Activated CD4-positive, alpha-beta memory T cell treated with anti-CD3 and anti-CD28 coated beads for 36 hours (primary cell): ENCODE measurements at regions of chr2 and their contacts with region 1.

Region 1: GRCh38 chr2:180980106-180980942 is at the start of gene UBE2E3:
- DNase-seq: peak; percentile 88
- H3K4me3 Mint-ChIP-seq: peak within 1 kb of the TSS; percentile 96
- H3K27ac Mint-ChIP-seq: peak within 1 kb of the TSS; percentile 87
- H3K4me1 Mint-ChIP-seq: peaks cover 37% of the 10 kb centered on the region
- H3K27me3 Mint-ChIP-seq: no peaks in the 10 kb centered on the region
- total RNA-seq, gene UBE2E3: 33.0 to 34.1 TPM

Region 2: DNA sequence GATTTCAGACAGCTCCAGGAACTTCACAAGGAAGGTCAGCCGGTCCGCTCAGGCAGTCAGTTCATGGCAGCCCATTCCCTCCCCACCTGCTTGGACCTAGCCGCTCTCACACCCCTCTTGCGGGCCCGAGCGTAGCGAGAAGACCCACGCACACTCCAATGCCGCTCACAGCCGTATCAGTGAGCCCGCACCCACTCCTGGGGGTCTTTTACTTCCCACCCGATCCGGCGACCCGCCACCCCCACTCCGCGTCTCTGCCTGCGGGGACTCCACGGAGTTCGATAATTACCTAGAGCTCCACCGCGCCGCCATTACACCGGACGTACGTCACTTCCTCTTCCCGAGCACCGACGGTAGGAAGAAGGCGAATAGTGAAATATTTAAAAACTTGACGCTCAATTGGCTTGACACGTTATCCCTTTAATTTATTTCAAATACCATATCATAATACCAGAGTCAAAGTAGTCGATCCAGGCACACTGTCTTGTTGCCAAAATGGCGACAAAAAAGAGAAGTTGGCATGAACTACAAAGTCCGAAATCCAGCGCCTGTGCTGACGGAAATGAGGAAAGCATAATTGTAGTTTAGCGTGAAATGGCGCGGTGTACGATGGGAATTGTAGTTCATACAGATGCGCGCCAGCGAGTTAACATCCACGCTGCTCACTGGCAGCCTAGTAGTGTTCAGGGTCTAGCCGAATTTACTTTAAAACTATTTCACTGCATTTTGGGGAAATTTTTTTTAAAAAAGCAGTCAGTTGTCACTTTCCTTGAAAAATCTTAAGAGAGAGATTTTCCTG is 973.3 kb before region 1 on chr2 and contains the start of gene CWC22:
- CTCF ChIA-PET with region 1: no interaction called
- POLR2A ChIA-PET with region 1: no interaction called
- intact Hi-C with region 1: loop called (anchors 5 kb)
- DNase-seq: peak; percentile 90
- H3K4me3 Mint-ChIP-seq: peak within 1 kb of the TSS; percentile 88
- H3K27ac Mint-ChIP-seq: peak within 1 kb of the TSS; percentile 99
- H3K4me1 Mint-ChIP-seq: peaks cover 38% of the 10 kb centered on the region
- H3K27me3 Mint-ChIP-seq: no peaks in the 10 kb centered on the region
- total RNA-seq, gene CWC22: 21.1 to 23.6 TPM

Region 3: DNA sequence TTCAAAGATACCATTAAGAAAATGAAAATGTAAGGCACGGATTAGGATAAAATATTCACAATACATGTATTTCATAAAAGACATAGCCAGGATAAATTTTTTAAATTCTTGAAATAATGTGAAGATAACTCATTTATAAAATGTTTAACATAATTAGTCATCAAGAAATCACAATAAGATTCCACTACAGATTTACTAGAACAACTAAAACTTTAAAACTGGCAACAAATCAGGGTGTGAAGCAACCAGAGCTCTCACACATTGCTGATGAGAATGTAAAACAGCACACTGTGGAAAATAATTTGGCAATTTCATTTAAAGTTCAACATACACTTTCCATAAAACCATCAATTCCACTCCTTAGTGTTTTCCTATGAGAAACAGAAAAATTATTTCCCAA is 89.5 kb before region 1 on chr2:
- CTCF ChIA-PET with region 1: no interaction called
- POLR2A ChIA-PET with region 1: no interaction called
- intact Hi-C with region 1: no loop called
- DNase-seq: no peak
- H3K4me3 Mint-ChIP-seq: no peak overlapping the region
- H3K27ac Mint-ChIP-seq: no peak overlapping the region
- H3K4me1 Mint-ChIP-seq: no peaks in the 10 kb centered on the region
- H3K27me3 Mint-ChIP-seq: no peaks in the 10 kb centered on the region

Region 4: GRCh38 chr2:180938451-180938850 is 41.9 kb before region 1 on chr2:
- CTCF ChIA-PET with region 1: interaction called, 3 read pairs
- POLR2A ChIA-PET with region 1: no interaction called
- intact Hi-C with region 1: loop called (anchors 1 kb)
- DNase-seq: no peak
- H3K4me3 Mint-ChIP-seq: no peak overlapping the region
- H3K27ac Mint-ChIP-seq: no peak overlapping the region
- H3K4me1 Mint-ChIP-seq: peaks cover 17% of the 10 kb centered on the region
- H3K27me3 Mint-ChIP-seq: peaks cover 4% of the 10 kb centered on the region

Region 5: DNA sequence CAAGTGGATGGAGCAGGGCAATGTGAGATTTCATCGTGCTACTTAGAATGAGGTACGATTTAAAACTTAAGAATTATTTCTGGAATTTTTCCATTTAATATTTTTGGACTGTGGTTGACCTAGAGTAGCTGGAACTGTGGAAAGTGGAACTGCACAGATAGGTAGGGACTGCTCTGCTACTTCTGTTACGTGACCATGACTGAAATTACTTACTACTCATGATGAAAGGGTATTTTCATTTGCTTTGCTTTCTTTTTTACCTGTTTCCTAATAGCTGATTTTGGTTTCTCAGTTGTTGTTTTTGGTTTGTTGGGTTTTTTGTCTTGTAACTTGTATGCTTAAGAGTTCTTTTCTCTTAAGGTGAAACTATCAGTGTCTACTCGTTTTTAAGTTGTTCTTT is 11.5 kb after region 1 on chr2:
- CTCF ChIA-PET with region 1: interaction called, 10 read pairs
- POLR2A ChIA-PET with region 1: interaction called, 10 read pairs
- intact Hi-C with region 1: no loop called
- DNase-seq: no peak
- H3K4me3 Mint-ChIP-seq: no peak overlapping the region
- H3K27ac Mint-ChIP-seq: no peak overlapping the region
- H3K4me1 Mint-ChIP-seq: peaks cover 24% of the 10 kb centered on the region
- H3K27me3 Mint-ChIP-seq: no peaks in the 10 kb centered on the region

Region 6: GRCh38 chr2:181058378-181059269 is 78.3 kb after region 1 on chr2:
- CTCF ChIA-PET with region 1: interaction called, 7 read pairs
- POLR2A ChIA-PET with region 1: no interaction called
- intact Hi-C with region 1: loop called (anchors 1 kb)
- DNase-seq: peak; percentile 24
- H3K4me3 Mint-ChIP-seq: no peak overlapping the region
- H3K27ac Mint-ChIP-seq: no peak overlapping the region
- H3K4me1 Mint-ChIP-seq: peaks cover 6% of the 10 kb centered on the region
- H3K27me3 Mint-ChIP-seq: no peaks in the 10 kb centered on the region

Region 7: DNA sequence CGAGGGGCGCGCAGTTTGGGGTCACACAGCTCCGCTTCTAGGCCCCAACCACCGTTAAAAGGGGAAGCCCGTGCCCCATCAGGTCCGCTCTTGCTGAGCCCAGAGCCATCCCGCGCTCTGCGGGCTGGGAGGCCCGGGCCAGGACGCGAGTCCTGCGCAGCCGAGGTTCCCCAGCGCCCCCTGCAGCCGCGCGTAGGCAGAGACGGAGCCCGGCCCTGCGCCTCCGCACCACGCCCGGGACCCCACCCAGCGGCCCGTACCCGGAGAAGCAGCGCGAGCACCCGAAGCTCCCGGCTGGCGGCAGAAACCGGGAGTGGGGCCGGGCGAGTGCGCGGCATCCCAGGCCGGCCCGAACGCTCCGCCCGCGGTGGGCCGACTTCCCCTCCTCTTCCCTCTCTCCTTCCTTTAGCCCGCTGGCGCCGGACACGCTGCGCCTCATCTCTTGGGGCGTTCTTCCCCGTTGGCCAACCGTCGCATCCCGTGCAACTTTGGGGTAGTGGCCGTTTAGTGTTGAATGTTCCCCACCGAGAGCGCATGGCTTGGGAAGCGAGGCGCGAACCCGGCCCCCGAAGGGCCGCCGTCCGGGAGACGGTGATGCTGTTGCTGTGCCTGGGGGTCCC is 476.9 kb after region 1 on chr2 and contains the start of gene ITGA4:
- CTCF ChIA-PET with region 1: interaction called, 3 read pairs
- POLR2A ChIA-PET with region 1: interaction called, 3 read pairs
- intact Hi-C with region 1: loop called (anchors 5 kb)
- DNase-seq: peak; percentile 90
- H3K4me3 Mint-ChIP-seq: peak within 1 kb of the TSS; percentile 88
- H3K27ac Mint-ChIP-seq: peak within 1 kb of the TSS; percentile 97
- H3K4me1 Mint-ChIP-seq: peaks cover 50% of the 10 kb centered on the region
- H3K27me3 Mint-ChIP-seq: no peaks in the 10 kb centered on the region
- total RNA-seq, gene ITGA4: 46.5 to 51.2 TPM

Region 8: GRCh38 chr2:182715896-182716668 is 1735.8 kb after region 1 on chr2 and contains the start of gene DNAJC10:
- CTCF ChIA-PET with region 1: no interaction called
- POLR2A ChIA-PET with region 1: no interaction called
- intact Hi-C with region 1: loop called (anchors 5 kb)
- DNase-seq: peak; percentile 91
- H3K4me3 Mint-ChIP-seq: no peak within 1 kb of the TSS
- H3K27ac Mint-ChIP-seq: no peak within 1 kb of the TSS
- H3K4me1 Mint-ChIP-seq: no peaks in the 10 kb centered on the region
- H3K27me3 Mint-ChIP-seq: peaks cover under 1% of the 10 kb centered on the region
- total RNA-seq, gene DNAJC10: 59.0 to 63.6 TPM